RWPE1 (cell line): ENCODE measurements at regions of chr2 and their contacts with region 1.

Region 1: DNA sequence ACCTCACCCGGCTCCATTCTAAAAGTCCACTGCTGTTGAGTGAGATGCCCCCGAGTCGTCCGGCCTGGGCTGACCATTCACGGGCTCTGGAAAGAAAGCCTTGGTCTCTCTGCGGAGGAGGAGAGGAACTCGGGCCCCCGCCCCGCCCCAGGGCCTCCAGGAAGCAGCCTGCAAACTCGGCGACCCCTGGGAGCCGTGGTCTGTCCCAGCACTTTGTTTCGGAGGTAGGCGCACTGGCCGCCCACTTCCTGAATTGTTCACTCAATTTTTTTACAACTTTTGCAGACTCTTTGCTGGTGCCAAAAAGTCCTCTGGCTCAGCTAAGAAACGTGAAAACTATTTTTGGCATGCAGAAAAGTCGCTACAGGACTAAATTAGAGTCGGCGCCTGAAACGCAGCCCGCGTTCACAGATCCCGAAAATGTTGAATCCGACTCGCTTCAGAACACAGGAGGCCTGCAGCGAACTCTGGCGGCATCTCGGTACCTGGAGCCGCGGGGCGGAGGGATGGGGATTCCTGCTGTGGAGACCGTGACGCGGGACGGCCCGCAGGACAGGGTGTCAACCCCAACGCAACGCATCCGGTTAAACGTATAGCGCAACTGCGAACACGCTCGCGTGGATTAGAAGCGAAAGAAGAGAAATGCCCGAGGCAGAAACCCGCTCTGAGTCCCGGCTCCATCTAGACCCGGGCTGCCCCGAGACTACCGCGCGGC is 1.5 kb downstream of the PXDN start:
- DNase-seq: peak; percentile 90
- H3K27ac ChIP-seq: peak overlapping the region; percentile 98
- CTCF ChIP-seq: peak; percentile 75

Region 2: DNA sequence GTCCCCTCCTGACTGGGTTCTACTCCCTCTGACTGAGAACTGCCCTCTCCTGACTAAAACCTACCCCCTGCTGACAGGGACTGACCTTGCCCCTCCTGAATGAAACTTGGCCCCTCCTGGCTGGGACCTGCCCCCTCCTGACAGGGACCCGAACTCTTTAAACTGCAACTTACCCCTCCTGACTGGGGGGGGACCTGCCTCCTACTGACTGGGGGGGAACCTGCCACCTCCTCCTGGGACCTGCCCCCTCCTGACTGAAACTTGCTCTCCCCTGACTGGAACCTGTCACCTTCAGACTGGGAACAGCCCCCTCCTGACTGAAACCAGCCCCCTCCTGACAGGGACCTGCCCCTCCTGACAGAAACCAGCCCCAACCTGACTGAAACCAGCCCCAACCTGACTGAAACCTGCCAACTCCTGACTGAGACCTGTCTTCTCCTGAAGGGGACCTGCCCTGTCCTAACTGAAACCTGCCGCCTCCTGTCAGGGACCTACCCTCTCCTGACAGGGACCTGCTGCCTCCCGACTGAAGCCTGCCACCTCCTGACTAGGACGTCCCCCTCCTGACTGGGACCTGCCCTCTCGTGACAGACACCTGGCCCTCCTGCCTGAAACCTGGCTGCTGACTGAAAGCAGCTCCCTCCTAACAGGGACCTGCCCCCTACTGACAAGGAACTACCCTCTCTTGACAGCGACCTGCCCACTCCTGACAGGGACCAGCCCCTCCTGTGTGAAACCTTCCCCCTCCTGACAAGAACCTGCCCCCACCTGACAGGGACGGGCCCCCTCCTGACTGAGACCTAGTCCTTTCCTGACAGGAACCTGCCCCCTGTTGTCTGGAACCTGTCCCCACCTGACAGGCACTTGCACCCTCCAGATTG is 85.6 kb before region 1 on chr2:
- CTCF ChIA-PET with region 1: no interaction called
- POLR2A ChIA-PET with region 1: interaction called, 15 read pairs
- DNase-seq: no peak
- H3K27ac ChIP-seq: peak overlapping the region; percentile 62
- CTCF ChIP-seq: no peak

Region 3: GRCh38 chr2:1718339-1719220 is 24.3 kb before region 1 on chr2:
- CTCF ChIA-PET with region 1: interaction called, 12 read pairs
- POLR2A ChIA-PET with region 1: no interaction called
- DNase-seq: no peak
- H3K27ac ChIP-seq: peak overlapping the region; percentile 52
- CTCF ChIP-seq: no peak

Region 4: DNA sequence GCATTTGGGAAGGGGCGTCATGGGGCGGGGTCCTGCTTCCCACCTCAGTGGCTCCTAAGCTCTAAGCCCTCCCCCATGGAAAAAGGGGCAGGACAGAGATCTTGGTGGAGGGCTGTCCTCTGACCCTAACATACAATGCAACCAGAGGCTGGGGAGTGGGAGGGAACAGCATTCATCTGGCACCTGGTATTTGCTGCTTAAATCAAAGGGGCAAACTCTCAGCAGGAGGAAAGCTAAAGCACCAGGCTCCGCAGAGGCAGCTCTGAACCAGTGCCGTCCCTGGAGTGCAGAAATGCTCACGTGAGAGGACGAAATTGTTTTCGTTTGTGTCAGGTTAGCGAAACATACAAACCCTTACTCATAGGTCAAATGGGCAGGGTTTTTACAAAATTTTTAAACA is 94.2 kb after region 1 on chr2:
- CTCF ChIA-PET with region 1: no interaction called
- POLR2A ChIA-PET with region 1: no interaction called
- DNase-seq: no peak
- H3K27ac ChIP-seq: no peak overlapping the region
- CTCF ChIP-seq: no peak